Psoas muscle (tissue), 8 donors: ENCODE measurements at regions of chr3 and their contacts with region 1.

Region 1: DNA sequence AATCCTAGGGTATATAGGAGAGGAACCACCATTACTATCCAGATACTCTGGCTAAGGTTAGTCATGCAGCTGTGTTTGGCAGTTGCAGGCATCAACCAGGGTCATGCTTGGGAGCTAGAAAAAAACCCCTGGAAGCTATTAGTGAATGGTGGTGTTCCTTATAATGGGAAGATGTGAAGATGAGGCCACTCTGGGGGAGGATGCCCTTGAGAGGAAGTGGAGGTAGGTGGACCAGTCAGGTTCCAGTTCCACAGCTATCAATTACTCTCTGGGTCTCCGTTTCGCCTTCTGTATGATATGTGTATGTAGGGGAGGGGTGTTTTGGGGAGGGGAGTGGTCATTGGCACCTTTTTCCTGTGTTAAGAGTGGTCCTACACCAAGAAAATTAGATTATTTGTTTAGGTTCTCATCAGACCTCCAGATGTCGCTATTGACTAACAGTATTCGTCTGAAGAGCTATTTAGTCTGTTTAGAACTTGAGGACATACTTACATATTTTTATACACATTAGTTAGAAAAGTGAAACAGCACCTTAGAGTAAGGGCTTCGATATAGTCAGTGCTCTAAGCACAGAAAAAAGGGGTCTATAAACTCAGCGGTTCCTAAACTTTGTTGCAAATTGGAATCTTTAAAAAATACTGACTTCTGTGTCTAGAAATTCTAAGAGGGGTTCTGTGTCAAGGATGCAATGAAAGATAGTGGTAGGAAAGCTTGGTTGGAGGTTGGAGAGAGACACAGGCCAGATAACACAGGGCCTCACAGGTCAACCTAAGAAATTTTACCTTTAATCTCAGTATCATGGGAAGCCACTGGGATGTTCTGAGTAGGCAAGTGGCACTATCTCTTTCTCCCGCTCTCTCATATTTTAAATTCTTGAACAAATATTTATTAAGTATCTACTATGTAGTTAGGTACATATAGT is 9.1 kb upstream of the HPS3 start:
- DNase-seq: no peak
- ATAC-seq: peak; percentile 62 to 91 (median 72)
- H3K4me3 ChIP-seq: no peak overlapping the region
- H3K27ac ChIP-seq: no peak overlapping the region
- H3K4me1 ChIP-seq: no peaks in the 10 kb centered on the region
- H3K27me3 ChIP-seq: no peaks in the 10 kb centered on the region
- CTCF ChIP-seq: peak; percentile 65

Region 2: DNA sequence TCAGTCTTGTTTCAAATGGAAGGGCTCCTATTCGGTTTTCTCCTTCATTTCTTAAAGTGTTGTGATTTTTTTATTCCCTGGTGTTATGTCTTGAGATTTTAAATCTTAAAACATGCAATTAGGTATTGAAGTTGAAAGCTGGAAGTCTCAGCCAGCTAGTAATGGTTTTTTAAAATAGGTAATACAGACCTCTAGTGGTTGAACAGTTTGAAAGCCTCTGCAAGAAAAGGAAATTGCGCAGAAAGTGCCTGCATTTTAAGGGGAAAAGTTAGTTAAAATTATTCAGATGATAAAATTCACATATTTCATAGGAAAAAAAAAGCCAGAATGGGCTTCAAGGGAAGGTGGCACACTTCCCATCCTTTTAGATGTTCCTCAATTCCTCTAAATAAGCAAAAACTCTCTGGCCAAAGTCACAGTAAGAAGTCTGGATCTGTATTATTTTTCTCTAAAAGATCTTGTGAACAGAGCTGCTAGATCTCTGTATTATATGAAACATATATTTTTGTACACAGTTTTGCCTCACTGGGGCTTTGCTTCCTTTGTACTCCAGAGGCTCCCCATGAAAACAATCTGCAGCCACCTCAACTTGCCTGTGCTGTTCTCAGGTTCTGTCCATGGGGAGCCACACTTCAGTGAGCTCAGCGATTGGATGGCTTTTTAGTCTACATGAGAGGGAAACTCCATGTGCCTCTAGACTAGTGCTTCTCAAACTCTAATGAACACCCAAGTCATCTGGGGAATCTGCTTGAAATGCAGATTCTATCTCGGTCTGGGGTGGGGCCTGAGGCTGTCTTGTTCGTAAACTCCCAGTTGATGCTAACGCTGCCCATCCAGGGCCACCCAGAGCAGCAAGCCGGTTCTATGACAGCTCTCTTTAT is 401.1 kb before region 1 on chr3:
- intact Hi-C with region 1: no loop called
- DNase-seq: no peak
- ATAC-seq: peak in 1 of 4 donors; percentile 51
- H3K4me3 ChIP-seq: no peak overlapping the region
- H3K27ac ChIP-seq: no peak overlapping the region
- H3K4me1 ChIP-seq: no peaks in the 10 kb centered on the region
- H3K27me3 ChIP-seq: no peaks in the 10 kb centered on the region
- CTCF ChIP-seq: peak; percentile 34

Region 3: DNA sequence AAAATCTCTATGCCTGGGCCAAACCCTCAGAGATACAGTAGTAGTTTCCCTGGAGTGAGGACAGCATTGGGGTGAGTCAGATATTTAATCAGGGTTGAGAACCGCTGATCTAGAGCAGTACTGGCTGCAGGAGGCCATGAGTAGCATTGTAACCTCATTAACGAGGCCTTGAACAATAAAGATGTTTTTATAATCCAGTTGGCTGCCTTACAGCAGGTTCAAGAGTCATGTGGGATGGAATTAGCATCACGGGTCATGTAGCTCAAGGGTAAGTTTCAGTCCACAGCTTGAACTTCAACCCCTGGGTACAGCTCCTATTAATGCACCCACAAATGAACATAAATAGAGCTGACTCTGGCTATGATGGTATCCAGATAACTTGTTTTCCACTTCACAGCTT is 14.3 kb after region 1 on chr3:
- intact Hi-C with region 1: no loop called
- DNase-seq: no peak
- ATAC-seq: no peak
- H3K4me3 ChIP-seq: no peak overlapping the region
- H3K27ac ChIP-seq: no peak overlapping the region
- H3K4me1 ChIP-seq: peaks cover 18% of the 10 kb centered on the region
- H3K27me3 ChIP-seq: no peaks in the 10 kb centered on the region
- CTCF ChIP-seq: no peak

Region 4: GRCh38 chr3:149273096-149273751 is 152.9 kb after region 1 on chr3:
- intact Hi-C with region 1: loop called (anchors 1 to 2 kb)
- DNase-seq: no peak
- ATAC-seq: peak; percentile 80 to 96 (median 90)
- H3K4me3 ChIP-seq: no peak overlapping the region
- H3K27ac ChIP-seq: no peak overlapping the region
- H3K4me1 ChIP-seq: peaks cover 3% of the 10 kb centered on the region
- H3K27me3 ChIP-seq: no peaks in the 10 kb centered on the region
- CTCF ChIP-seq: peak; percentile 96